Activated CD4-positive, alpha-beta T cell treated with anti-CD3 and anti-CD28 coated beads, Interleukin-2, amount 10 ng/mL, durations not matched to agents 24 days and 14 days (primary cell): ENCODE measurements at regions of chr1 and their contacts with region 1.

Region 1: DNA sequence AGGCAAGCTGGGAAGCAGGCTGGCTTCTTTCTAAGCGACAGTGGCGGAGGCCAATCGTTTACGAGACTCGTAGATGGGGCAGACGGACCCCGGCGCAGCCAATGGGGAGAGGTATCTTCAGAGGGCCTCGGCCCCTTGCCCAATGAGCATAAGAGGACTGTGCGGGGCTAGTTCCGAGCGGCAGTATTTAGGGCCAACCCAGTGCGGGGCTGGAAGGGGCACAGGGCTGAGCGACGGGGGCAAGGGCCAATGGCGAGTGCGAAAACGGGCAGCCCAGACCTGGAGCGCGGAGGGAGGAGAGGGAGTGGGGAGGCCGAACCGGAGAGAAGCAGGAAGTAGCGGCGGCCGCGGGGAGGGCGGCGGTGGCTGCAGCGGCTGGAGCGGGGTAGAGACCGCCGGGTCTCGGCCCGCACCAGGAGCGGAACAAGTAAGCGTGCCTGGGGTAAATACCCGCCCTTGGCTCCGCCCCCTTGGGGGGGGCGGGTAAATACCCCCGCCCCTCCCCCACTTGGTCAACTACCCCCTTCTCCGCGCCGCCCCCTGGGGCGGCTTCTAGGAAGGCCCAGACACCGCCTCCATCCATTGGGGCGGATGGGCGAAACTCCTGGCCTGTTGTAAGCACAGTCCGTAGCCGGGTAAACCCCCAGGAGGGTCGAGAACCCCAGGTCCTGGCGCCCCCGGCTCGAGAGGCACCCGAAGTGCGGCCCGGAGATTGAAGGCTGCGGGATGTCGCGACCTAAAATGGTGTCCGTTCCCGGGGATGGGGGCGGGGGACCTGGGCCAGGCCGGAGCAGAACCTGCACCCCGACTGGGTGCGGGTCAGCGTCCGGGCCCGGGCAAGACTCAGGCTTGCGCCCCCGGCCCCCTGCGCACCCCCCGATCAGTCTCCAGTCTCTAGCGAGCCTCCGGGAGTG is at the start of gene ZNF687:
- DNase-seq: peak; percentile 99
- H3K4me3 Mint-ChIP-seq: peak within 1 kb of the TSS; percentile 99
- H3K27ac Mint-ChIP-seq: peak within 1 kb of the TSS; percentile 100
- H3K4me1 Mint-ChIP-seq: peaks cover 26% of the 10 kb centered on the region
- H3K27me3 Mint-ChIP-seq: no peaks in the 10 kb centered on the region
- total RNA-seq, gene ZNF687: 25.4 and 26.8 TPM in 2 replicates

Region 2: GRCh38 chr1:151189638-151190445 is 92.4 kb before region 1 on chr1 and contains the start of gene VPS72:
- intact Hi-C with region 1: loop called (anchors 1 kb)
- DNase-seq: peak; percentile 96
- H3K4me3 Mint-ChIP-seq: peak within 1 kb of the TSS; percentile 97
- H3K27ac Mint-ChIP-seq: peak within 1 kb of the TSS; percentile 93
- H3K4me1 Mint-ChIP-seq: peaks cover 26% of the 10 kb centered on the region
- H3K27me3 Mint-ChIP-seq: peaks cover 6% of the 10 kb centered on the region
- total RNA-seq, gene VPS72: 86.7 and 92.3 TPM in 2 replicates

Region 3: GRCh38 chr1:151254217-151255213 is 27.7 kb before region 1 on chr1 and contains the start of gene PSMD4:
- intact Hi-C with region 1: loop called (anchors 1 kb)
- DNase-seq: peak; percentile 98
- H3K4me3 Mint-ChIP-seq: peak within 1 kb of the TSS; percentile 90
- H3K27ac Mint-ChIP-seq: peak within 1 kb of the TSS; percentile 94
- H3K4me1 Mint-ChIP-seq: peaks cover 25% of the 10 kb centered on the region
- H3K27me3 Mint-ChIP-seq: no peaks in the 10 kb centered on the region
- total RNA-seq, gene PSMD4: 288 and 304 TPM in 2 replicates

Region 4: GRCh38 chr1:151311589-151312331 is 29.5 kb after region 1 on chr1:
- intact Hi-C with region 1: loop called (anchors 1 kb)
- DNase-seq: peak; percentile 85
- H3K4me3 Mint-ChIP-seq: peak overlapping the region; percentile 57
- H3K27ac Mint-ChIP-seq: peak overlapping the region; percentile 94
- H3K4me1 Mint-ChIP-seq: peaks cover 32% of the 10 kb centered on the region
- H3K27me3 Mint-ChIP-seq: no peaks in the 10 kb centered on the region

Region 5: DNA sequence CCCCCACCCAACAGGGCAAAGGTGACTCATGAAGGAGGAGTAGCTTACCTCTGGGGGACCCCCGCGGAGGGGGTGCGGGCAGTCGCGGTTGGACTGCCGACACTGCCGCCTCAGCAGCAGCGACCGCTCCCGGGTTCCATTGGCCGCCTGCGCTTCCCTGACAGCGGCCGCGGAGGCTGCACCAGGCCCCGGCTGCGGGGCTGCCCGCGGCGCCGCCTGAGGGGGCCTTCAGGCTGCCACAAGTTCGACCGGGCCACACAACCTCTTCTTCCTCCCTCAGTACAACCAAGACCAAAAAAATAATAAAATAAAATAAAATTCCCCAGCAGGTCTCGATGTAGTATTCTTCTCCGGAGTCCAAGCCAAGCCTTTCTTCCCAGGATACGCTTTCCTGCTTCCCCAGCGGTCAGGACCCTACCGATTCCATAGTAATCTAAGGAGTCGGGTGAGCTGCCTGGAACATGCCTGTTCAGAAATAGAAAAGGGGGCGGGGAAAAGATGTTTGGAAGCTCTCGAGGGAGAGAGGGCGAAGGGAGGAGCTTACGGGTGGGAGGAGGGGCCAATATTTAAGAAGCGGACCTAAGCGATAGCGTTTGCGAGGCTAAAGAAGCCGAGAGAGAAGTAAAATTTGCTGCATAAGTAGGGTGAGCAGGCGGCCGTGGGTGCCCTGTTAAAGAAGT is 45.1 kb after region 1 on chr1 and contains the start of gene PI4KB:
- intact Hi-C with region 1: loop called (anchors 2 kb)
- DNase-seq: peak; percentile 97
- H3K4me3 Mint-ChIP-seq: peak within 1 kb of the TSS; percentile 95
- H3K27ac Mint-ChIP-seq: peak within 1 kb of the TSS; percentile 97
- H3K4me1 Mint-ChIP-seq: peaks cover 28% of the 10 kb centered on the region
- H3K27me3 Mint-ChIP-seq: no peaks in the 10 kb centered on the region
- total RNA-seq, gene PI4KB: 57.1 and 59.2 TPM in 2 replicates

Region 6: DNA sequence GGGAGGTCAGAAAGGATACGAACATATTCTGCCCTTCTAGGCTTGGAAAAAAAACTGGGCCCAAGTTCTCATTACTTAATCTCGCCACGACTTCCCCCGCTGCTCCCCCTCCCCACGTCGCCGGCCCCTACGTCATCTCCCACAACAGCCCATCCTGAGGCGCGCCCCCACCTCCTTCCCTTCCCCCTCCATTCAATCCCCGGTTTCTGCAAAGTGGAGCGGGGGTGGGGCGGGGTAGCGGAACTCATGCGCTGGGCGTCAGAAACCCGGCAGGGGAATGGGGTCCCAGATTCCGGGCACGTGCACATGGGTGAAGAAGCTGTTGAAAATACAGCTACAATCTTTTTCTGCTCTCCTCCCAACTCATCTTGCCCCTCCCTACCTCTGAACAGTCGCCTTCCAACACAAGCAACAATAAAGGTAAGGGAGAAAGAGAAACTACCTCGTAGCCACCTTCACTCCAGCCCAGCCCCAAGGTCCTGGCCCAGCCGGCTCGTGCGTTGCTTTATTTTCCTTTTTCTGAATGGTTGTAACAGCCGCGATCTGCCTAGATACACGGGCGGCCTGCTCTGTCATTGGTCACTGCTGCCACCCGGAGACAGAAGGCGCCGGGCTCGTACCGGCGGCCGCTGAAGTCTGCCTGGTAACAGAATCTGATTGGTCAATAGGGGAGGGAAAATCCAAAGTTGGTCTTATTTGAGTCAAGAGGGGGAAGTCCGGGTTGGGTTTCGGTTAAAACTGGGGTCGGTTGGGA is 64.7 kb after region 1 on chr1 and contains the start of gene RFX5:
- intact Hi-C with region 1: loop called (anchors 1 kb)
- DNase-seq: peak; percentile 98
- H3K4me3 Mint-ChIP-seq: peak within 1 kb of the TSS; percentile 95
- H3K27ac Mint-ChIP-seq: peak within 1 kb of the TSS; percentile 98
- H3K4me1 Mint-ChIP-seq: peaks cover 38% of the 10 kb centered on the region
- H3K27me3 Mint-ChIP-seq: no peaks in the 10 kb centered on the region
- total RNA-seq, gene RFX5: 69.2 and 73.1 TPM in 2 replicates

Region 7: GRCh38 chr1:151361913-151362815 is 79.9 kb after region 1 on chr1:
- intact Hi-C with region 1: no loop called
- DNase-seq: no peak
- H3K4me3 Mint-ChIP-seq: no peak overlapping the region
- H3K27ac Mint-ChIP-seq: no peak overlapping the region
- H3K4me1 Mint-ChIP-seq: no peaks in the 10 kb centered on the region
- H3K27me3 Mint-ChIP-seq: peaks cover 4% of the 10 kb centered on the region